Activated CD8-positive, alpha-beta memory T cell treated with anti-CD3 and anti-CD28 coated beads, Interleukin-2, amount 10 ng/mL, durations not matched to agents 7 days and 5 days (primary cell): ENCODE measurements at regions of chr1 and their contacts with region 1.

Region 1: DNA sequence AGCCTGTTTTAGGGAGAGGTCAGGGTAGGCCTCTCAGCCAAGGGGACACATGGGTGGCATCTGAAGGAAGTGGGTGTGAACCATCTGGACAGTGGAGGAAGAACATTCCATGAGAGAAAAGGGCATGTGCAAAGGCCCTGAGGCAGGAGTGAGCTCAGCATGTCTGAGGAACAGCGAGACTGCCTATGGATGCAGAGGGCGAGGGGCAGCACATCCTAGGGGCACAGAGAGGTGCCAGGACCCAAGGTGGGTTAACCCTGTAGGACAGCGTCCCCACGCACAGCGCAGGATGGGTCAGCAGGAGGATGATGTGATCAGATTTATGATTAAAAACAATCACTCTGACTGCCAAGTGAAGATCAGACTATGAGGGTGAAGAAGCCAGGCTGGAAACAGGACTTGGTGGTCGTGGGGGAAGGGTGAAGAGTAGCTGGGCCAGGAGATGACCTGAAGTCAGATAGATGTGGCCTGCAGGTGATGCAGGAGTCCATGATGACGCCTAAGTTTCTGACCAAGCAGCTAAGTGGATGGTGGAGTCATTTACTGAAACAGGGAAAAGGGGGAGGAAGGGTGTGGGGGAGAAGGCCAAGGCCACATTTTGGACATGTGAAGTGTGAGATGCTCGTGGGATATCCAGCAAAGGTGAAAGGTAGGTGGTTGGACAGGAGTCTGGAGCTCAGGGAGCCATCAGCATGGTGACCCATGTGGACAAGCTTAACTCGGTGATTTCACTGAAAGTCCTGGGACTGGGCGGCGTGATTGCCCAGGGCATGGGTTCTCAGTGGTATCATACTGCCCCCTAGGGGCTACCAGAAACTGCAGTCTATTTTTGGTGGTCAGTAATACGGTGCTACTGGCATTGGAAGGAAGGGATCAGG is 37.8 kb downstream of the PABPC4 start:
- DNase-seq: peak; percentile 67
- ATAC-seq: peak; percentile 96
- H3K4me3 Mint-ChIP-seq: no peak overlapping the region
- H3K27ac Mint-ChIP-seq: no peak overlapping the region
- H3K4me1 Mint-ChIP-seq: peaks cover 1% of the 10 kb centered on the region
- H3K27me3 Mint-ChIP-seq: no peaks in the 10 kb centered on the region

Region 2: DNA sequence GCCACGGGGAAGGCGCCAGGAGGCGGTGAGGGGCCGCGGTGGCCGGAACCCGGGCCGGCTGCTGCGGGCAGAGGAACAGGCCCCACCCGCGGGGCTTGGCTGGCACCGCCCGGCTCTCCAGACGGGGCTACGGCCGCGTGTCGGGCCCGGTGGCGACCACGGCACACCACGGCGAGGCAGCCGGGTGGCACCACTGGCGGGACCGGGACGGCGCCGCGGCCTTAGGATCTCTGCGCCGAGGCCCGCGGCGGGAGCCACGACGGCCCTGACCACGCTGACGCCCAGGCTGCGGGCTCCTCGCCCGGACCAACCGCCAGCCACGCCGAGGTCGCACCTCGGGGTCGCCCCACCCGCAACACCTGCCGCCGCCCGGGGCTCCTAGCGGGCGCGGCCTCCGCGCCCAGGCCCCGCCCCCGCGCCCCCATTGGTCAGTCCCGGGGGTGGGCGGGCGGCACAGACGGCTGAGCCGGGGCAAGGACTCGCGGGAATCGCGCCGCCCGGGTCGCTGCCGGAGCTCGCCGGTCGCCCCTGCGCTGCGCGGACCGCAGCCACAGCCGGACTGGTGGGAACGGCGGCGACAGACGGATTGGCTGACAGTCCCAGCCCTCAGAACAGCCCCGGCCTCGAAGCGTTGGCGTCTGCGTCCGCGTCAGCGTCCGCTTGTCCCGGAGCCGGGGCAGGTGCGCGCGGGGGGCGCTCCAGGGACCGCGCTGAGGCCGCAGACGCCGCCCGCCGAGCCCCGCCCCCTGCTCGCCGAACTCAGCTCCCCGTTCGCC is 47.5 kb before region 1 on chr1 and contains the start of gene BMP8A:
- CTCF ChIA-PET with region 1: interaction called, 10 read pairs
- DNase-seq: peak; percentile 71
- ATAC-seq: peak; percentile 95
- H3K4me3 Mint-ChIP-seq: peak within 1 kb of the TSS; percentile 45
- H3K27ac Mint-ChIP-seq: no peak within 1 kb of the TSS
- H3K4me1 Mint-ChIP-seq: peaks cover 6% of the 10 kb centered on the region
- H3K27me3 Mint-ChIP-seq: peaks cover 34% of the 10 kb centered on the region
- total RNA-seq, gene BMP8A: not detected

Region 3: DNA sequence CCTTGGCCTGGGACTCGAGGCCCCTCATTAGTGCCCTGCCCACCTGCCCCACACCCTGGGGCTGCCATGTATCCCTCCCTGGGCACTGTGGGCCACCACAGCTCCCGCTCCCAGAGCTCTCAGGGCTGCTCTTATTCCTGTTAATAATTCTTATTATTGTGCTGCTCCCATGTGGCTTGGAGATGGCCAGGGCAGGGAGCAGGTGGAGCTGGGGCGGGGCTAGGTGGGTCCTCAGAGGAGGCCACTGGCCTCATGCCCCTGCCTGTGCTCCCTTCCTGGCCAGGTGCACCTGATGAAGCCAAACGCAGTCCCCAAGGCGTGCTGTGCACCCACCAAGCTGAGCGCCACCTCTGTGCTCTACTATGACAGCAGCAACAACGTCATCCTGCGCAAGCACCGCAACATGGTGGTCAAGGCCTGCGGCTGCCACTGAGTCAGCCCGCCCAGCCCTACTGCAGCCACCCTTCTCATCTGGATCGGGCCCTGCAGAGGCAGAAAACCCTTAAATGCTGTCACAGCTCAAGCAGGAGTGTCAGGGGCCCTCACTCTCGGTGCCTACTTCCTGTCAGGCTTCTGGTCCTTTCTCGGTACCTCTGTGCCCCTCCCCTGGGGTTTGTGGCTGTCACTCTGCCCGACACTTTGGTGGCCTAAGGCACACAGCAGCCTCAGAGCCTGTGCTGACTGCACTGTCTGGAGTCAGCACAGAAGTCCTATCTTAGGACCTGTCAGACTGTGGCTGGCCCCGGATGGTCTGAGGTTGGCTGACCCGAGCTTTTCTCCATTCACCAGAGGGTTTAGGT is 13.3 kb before region 1 on chr1:
- CTCF ChIA-PET with region 1: interaction called, 16 read pairs
- DNase-seq: peak; percentile 90
- ATAC-seq: peak; percentile 98
- H3K4me3 Mint-ChIP-seq: no peak overlapping the region
- H3K27ac Mint-ChIP-seq: peak overlapping the region; percentile 54
- H3K4me1 Mint-ChIP-seq: peaks cover 19% of the 10 kb centered on the region
- H3K27me3 Mint-ChIP-seq: no peaks in the 10 kb centered on the region